Activated CD4-positive, alpha-beta memory T cell treated with anti-CD3 and anti-CD28 coated beads, Interleukin-2, amount 10 ng/mL, durations not matched to agents 7 days and 5 days (primary cell): ENCODE measurements at regions of chr9 and their contacts with region 1.

Region 1: GRCh38 chr9:35071814-35072460 is 488 bp downstream of the VCP start:
- DNase-seq: peak; percentile 79
- H3K4me3 Mint-ChIP-seq: peak overlapping the region; percentile 89
- H3K27ac Mint-ChIP-seq: peak overlapping the region; percentile 95
- H3K4me1 Mint-ChIP-seq: peaks cover 71% of the 10 kb centered on the region
- H3K27me3 Mint-ChIP-seq: no peaks in the 10 kb centered on the region

Region 2: DNA sequence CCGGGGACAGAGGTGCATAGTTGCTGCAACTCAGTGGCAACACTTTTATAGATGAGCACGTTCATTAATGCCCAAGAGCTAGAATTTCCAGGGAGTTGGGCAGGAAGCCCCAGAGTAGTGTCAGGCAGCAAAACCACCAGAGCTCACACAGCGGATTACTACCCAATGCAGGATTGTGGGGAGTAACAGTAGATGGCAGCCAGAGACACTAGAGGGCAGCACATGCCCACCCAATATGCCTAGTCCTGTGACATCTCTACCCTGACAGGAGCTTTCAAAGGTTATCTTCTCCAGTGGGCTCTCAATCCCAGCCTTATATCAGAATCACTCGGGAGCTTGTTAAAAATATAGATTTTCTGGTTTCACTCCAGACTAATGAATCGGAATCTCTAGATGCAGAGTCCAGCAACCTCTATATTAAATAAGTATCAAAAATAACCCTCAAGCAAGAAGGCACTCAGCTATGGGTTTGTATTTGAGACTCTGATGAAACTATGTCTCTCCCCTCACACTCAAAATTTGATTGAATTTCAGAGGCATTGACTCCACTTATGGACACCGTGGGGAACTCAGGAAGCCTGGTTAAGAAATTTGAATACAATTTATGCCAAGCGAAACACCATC is 172.3 kb before region 1 on chr9:
- CTCF ChIA-PET with region 1: interaction called, 15 read pairs
- POLR2A ChIA-PET with region 1: no interaction called
- DNase-seq: peak; percentile 82
- H3K4me3 Mint-ChIP-seq: no peak overlapping the region
- H3K27ac Mint-ChIP-seq: no peak overlapping the region
- H3K4me1 Mint-ChIP-seq: no peaks in the 10 kb centered on the region
- H3K27me3 Mint-ChIP-seq: peaks cover 26% of the 10 kb centered on the region

Region 3: GRCh38 chr9:35035851-35036701 is 35.9 kb before region 1 on chr9:
- CTCF ChIA-PET with region 1: interaction called, 3 read pairs
- POLR2A ChIA-PET with region 1: interaction called, 11 read pairs
- DNase-seq: peak; percentile 67
- H3K4me3 Mint-ChIP-seq: peak overlapping the region; percentile 36
- H3K27ac Mint-ChIP-seq: peak overlapping the region; percentile 30
- H3K4me1 Mint-ChIP-seq: peaks cover 11% of the 10 kb centered on the region
- H3K27me3 Mint-ChIP-seq: no peaks in the 10 kb centered on the region

Region 4: GRCh38 chr9:35060548-35061207 is 11.3 kb before region 1 on chr9:
- CTCF ChIA-PET with region 1: no interaction called
- POLR2A ChIA-PET with region 1: interaction called, 136 read pairs
- DNase-seq: no peak
- H3K4me3 Mint-ChIP-seq: no peak overlapping the region
- H3K27ac Mint-ChIP-seq: no peak overlapping the region
- H3K4me1 Mint-ChIP-seq: peaks cover 2% of the 10 kb centered on the region
- H3K27me3 Mint-ChIP-seq: no peaks in the 10 kb centered on the region

Region 5: DNA sequence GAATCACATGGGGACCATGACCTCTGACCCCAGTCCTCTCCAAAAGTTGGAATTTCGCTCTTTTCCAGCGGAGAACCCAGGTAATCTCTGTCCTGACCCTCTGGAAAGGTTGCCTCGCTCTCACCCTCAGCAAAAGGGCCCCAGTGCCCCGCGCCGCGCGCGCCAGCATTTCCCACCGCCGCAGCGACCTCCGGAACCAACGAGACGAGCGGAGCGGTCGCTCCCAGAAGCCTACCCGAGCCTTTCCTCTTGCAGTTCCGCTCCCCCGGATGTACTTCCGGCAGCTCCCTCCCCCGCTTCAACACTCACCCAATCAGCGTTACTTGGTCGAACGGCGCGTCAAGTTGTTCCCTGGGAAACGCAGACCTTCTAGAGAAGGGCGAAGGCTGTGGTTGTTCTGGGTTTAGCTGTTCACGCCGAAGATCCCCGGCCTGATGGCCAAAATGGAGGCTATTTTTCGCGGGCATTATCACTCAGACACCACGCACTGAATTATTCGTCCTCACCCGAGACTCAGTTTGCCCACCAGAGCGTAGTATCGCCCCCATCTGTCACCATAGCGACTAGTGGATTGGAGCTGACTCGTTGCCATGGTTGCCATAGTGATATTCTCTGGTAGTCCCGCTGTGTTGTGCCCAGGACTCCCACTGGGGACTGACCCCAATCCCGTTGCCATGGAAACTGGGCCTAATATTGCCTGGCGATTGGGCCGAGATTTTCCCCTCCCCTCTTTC is 31.2 kb after region 1 on chr9 and contains the start of gene STOML2:
- CTCF ChIA-PET with region 1: interaction called, 4 read pairs
- POLR2A ChIA-PET with region 1: interaction called, 132 read pairs
- DNase-seq: peak; percentile 95
- H3K4me3 Mint-ChIP-seq: peak within 1 kb of the TSS; percentile 80
- H3K27ac Mint-ChIP-seq: peak within 1 kb of the TSS; percentile 88
- H3K4me1 Mint-ChIP-seq: peaks cover 39% of the 10 kb centered on the region
- H3K27me3 Mint-ChIP-seq: no peaks in the 10 kb centered on the region
- total RNA-seq, gene STOML2: 96.0 to 96.9 TPM

Region 6: GRCh38 chr9:35116898-35117551 is 45.1 kb after region 1 on chr9:
- CTCF ChIA-PET with region 1: interaction called, 10 read pairs
- POLR2A ChIA-PET with region 1: interaction called, 38 read pairs
- DNase-seq: peak; percentile 89
- H3K4me3 Mint-ChIP-seq: peak overlapping the region; percentile 98
- H3K27ac Mint-ChIP-seq: peak overlapping the region; percentile 92
- H3K4me1 Mint-ChIP-seq: peaks cover 38% of the 10 kb centered on the region
- H3K27me3 Mint-ChIP-seq: no peaks in the 10 kb centered on the region

Region 7: DNA sequence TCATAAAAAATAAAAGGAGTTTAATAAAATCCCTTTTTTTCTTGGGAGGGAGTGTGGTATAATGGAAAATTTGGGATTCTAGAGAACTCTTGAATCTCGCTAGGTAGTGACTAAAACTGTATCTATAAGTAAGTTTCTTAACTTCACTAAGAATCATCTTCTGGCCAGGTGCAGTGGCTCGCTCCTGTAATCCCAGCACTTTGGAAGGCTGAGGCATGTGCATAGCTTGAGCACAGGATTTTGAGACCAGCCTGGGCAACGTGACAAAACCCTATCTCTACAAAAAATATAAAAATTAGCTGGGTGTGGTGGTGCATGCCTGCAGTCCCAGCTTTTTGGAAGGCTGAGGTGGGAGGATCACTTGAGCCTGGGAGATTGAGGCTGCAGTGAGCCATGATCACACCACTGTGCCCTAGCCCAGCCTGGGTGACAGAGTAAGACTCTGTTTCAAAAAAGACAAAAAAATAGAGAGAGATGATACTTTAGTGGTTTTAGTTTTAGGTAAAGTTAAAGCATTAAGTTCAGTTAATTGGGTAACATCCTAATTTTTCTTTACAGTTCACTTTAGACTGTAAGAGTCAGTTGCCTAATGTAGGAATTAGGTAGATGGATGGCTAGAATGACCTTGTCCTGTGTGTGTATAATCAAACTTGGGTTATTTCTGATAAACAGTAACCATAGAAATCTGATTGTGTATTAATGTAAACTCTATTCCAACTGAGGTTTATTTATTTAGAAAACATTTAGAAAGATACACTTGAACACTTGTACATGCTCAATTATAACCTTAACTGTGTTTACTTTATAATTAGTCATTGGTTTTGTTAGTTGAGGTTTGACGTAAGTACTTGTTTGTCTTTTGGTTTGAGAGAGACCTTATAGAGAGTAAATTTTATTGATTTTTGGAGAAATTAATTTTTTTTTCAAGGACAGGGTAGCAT is 107.7 kb after region 1 on chr9:
- CTCF ChIA-PET with region 1: no interaction called
- POLR2A ChIA-PET with region 1: no interaction called
- DNase-seq: no peak
- H3K4me3 Mint-ChIP-seq: no peak overlapping the region
- H3K27ac Mint-ChIP-seq: no peak overlapping the region
- H3K4me1 Mint-ChIP-seq: no peaks in the 10 kb centered on the region
- H3K27me3 Mint-ChIP-seq: peaks cover 7% of the 10 kb centered on the region

Region 8: DNA sequence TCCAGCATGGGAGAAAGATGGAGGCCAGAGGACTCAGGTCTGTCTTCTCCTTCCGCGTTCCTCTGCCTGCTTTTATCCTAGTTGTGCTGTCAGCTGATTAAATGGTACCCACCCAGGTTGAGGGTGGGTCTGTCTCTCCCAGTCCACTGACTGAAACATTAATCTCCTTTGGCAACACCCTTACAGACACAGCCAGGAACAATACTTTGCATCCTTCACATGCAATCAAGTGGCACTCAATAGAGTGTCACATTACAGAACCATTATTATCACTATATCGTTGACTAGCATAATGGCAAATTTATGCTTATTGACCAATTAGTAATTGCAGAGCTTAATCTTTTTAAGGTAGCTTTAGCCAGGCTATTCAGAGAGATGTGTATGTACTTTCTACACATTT is 154.7 kb after region 1 on chr9:
- CTCF ChIA-PET with region 1: no interaction called
- POLR2A ChIA-PET with region 1: no interaction called
- DNase-seq: no peak
- H3K4me3 Mint-ChIP-seq: no peak overlapping the region
- H3K27ac Mint-ChIP-seq: no peak overlapping the region
- H3K4me1 Mint-ChIP-seq: no peaks in the 10 kb centered on the region
- H3K27me3 Mint-ChIP-seq: no peaks in the 10 kb centered on the region